ENCODE measurements at regions of chr10 and their contacts with region 1.

Region 1: GRCh38 chr10:96236090-96236478 is 35.3 kb downstream of the BLNK start:
- DNase-seq: no peak
- ATAC-seq: no peak
- H3K4me3 ChIP-seq: no peak overlapping the region
- H3K27ac ChIP-seq: no peak overlapping the region
- H3K4me1 ChIP-seq: no peaks in the 10 kb centered on the region
- H3K27me3 ChIP-seq: no peaks in the 10 kb centered on the region

Region 2: DNA sequence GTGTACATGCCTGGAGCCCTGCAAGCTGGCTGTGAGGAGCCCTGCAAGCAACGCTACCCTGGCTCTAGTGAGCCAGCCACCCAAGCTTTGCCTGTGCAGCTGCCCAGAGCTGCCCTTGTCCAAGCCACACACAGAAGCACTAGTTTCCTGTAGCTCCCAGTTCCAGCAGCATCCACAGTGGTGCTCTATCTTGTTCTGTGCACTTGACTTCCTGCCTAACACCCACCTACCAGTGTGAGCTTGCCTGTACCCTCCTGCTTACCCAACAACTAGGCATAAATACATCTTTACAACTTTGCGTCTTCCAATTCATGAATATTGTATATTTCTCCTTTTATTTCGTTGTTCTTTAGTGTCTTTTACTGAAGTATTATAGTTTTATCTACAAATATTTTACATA is 138.2 kb before region 1 on chr10:
- intact Hi-C with region 1: no loop called
- DNase-seq: no peak
- ATAC-seq: no peak
- H3K4me3 ChIP-seq: no peak overlapping the region
- H3K27ac ChIP-seq: no peak overlapping the region
- H3K4me1 ChIP-seq: no peaks in the 10 kb centered on the region
- H3K27me3 ChIP-seq: peaks cover 28% of the 10 kb centered on the region

Region 3: GRCh38 chr10:96287392-96288105 is 51.5 kb after region 1 on chr10:
- intact Hi-C with region 1: loop called in 3 of 4 experiments (anchors 5 to 10 kb)
- DNase-seq: no peak
- ATAC-seq: no peak
- H3K4me3 ChIP-seq: no peak overlapping the region
- H3K27ac ChIP-seq: no peak overlapping the region
- H3K4me1 ChIP-seq: no peaks in the 10 kb centered on the region
- H3K27me3 ChIP-seq: no peaks in the 10 kb centered on the region

Measured in right cardiac atrium (tissue), 5 donors.